Prostate gland (tissue), 2 donors: ENCODE measurements at regions of chr2 and their contacts with region 1.

Region 1: GRCh38 chr2:102187496-102188150 is 800 bp downstream of the IL1RL2 start:
- DNase-seq: no peak
- H3K4me3 ChIP-seq: peak overlapping the region; percentile 37 to 43
- H3K27ac ChIP-seq: peak overlapping the region; percentile 73 to 74
- H3K4me1 ChIP-seq: peaks cover 5% of the 10 kb centered on the region
- H3K27me3 ChIP-seq: no peaks in the 10 kb centered on the region
- CTCF ChIP-seq: peak in 3 of 4 experiments; percentile 14 to 56 (median 51)
- POLR2A ChIP-seq: peak; percentile 13

Region 2: GRCh38 chr2:102240640-102241370 is 53.2 kb after region 1 on chr2:
- intact Hi-C with region 1: loop called (anchors 10 kb)
- DNase-seq: peak; percentile 93
- H3K4me3 ChIP-seq: no peak overlapping the region
- H3K27ac ChIP-seq: peak overlapping the region; percentile 52 to 64
- H3K4me1 ChIP-seq: no peaks in the 10 kb centered on the region
- H3K27me3 ChIP-seq: no peaks in the 10 kb centered on the region
- CTCF ChIP-seq: peak; percentile 93 to 99 (median 98)
- POLR2A ChIP-seq: no peak